ENCODE measurements at regions of chr3 and their contacts with region 1.

Region 1: GRCh38 chr3:27721717-27722542 is at the start of gene EOMES:
- DNase-seq: peak; percentile 73
- ATAC-seq: peak; percentile 80
- H3K4me3 ChIP-seq: peak within 1 kb of the TSS; percentile 78 to 90
- H3K27ac ChIP-seq: peak within 1 kb of the TSS; percentile 70
- H3K4me1 ChIP-seq: peaks cover 3 to 10% of the 10 kb centered on the region in 2 experiments; a peak in 2 of 4 replicates
- H3K27me3 ChIP-seq: no peaks in the 10 kb centered on the region
- CTCF ChIP-seq: peak; percentile 53 to 64 (median 63); a peak in 5 of 6 replicates
- POLR2A ChIP-seq: peak; percentile 51
- RAD21 ChIP-seq: peak; percentile 53
- total RNA-seq, gene EOMES: 1.4 TPM

Region 2: GRCh38 chr3:27114684-27115083 is 607.2 kb before region 1 on chr3:
- CTCF ChIA-PET with region 1: no interaction called
- POLR2A ChIA-PET with region 1: no interaction called
- RAD21 ChIA-PET with region 1: no interaction called
- intact Hi-C with region 1: no loop called
- DNase-seq: no peak
- ATAC-seq: no peak
- H3K4me3 ChIP-seq: no peak overlapping the region
- H3K27ac ChIP-seq: no peak overlapping the region
- H3K4me1 ChIP-seq: no peaks in the 10 kb centered on the region
- H3K27me3 ChIP-seq: no peaks in the 10 kb centered on the region
- CTCF ChIP-seq: no peak
- POLR2A ChIP-seq: no peak
- RAD21 ChIP-seq: no peak

Region 3: GRCh38 chr3:27392950-27393679 is 328.8 kb before region 1 on chr3:
- CTCF ChIA-PET with region 1: no interaction called
- POLR2A ChIA-PET with region 1: no interaction called
- RAD21 ChIA-PET with region 1: no interaction called
- intact Hi-C with region 1: no loop called
- DNase-seq: no peak
- ATAC-seq: no peak
- H3K4me3 ChIP-seq: no peak overlapping the region
- H3K27ac ChIP-seq: no peak overlapping the region
- H3K4me1 ChIP-seq: no peaks in the 10 kb centered on the region
- H3K27me3 ChIP-seq: no peaks in the 10 kb centered on the region
- CTCF ChIP-seq: no peak
- POLR2A ChIP-seq: no peak
- RAD21 ChIP-seq: no peak

Region 4: DNA sequence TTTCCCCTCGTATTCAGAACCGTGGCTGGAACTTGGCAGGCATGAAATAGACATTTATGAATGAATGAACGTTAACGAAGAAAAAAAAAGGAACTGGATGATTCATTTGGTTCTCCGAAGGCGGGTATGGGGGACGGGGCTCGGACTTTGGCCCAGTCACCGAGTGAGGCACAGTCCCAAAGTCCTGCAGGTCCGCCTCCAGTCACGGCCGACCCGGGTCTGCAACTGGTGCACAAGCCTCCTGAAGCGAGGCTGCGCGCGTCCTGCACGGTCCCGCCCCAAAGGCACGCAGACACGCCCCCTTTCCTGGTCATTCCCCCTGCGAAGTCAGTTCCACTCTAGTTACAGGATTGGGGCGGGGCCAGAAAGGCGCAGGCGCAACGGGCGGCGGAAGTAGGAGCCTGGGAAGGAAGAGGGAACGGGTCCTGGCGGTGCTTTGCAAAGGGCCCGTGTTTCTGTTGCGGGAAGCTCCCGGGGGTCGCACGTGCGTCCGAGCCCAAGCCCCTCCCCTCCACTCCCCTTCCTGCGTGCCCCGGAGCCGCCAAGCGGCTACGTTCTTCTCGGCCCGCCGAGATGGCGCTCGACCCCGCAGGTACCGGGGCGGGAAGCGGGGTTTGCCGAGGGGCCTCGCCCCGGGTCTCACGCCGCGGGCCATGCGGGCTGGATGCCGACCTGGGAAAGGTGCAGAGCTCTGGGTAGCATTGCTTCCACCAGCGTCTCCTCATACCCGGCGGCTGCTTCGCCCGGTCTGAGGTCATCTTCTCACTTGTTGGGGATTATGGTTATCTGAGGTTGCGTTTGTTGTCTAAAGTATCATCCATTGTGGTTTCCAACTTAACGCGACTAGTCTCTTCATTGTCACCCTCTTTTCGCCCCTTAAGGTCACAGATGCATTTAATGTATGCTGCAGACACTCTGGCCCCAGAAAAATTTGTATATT is 519.6 kb after region 1 on chr3 and contains the start of gene CMC1:
- CTCF ChIA-PET with region 1: no interaction called
- POLR2A ChIA-PET with region 1: no interaction called
- RAD21 ChIA-PET with region 1: no interaction called
- intact Hi-C with region 1: loop called (anchors 1 kb)
- DNase-seq: peak; percentile 89
- ATAC-seq: peak; percentile 99
- H3K4me3 ChIP-seq: peak within 1 kb of the TSS; percentile 70 to 92
- H3K27ac ChIP-seq: peak within 1 kb of the TSS; percentile 79
- H3K4me1 ChIP-seq: peaks cover 0 to 17% of the 10 kb centered on the region in 2 experiments; a peak in 3 of 4 replicates
- H3K27me3 ChIP-seq: no peaks in the 10 kb centered on the region
- CTCF ChIP-seq: no peak
- POLR2A ChIP-seq: peak; percentile 96
- RAD21 ChIP-seq: no peak
- total RNA-seq, gene CMC1: 29.0 TPM